ENCODE measurements at regions of chr3 and their contacts with region 1.

Region 1: DNA sequence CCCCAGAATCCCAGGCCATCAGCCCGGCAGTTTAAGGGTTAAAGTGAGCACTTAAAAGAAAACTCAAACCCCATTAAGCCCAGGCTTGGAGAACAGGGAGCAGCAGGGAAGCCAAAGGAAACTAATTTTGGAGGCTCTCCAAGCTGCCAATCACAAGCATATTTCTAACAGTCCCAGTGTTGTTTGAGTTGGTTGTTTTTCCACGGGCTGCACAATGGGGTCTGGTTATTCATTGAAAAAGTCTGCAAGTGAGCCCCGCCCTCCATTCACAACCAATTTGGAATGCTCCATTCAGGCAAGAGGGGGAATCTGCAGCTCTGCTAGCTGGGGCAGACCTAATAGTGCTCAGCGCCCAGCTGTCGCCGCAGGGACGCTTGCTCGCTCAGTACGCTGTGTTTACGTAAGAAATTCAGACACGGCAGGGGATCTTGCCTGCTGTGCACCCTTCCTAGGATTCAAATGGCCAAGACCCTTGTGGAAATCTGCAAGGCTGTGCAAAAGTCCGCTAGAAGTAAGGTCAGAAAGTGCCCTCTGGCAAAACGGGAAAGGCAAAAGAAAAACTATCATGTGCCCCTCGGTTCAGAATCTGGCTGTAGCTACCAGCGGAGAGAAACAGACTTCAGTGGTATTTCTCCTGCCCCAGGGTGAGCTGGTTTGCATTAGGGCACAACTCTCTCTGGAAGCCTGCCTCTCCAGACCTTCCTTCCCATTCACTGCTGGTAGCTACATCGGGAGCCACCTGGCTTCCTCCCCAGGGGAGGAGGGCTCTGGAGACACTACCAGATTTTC is 11.0 kb downstream of the ETV5 start:
- DNase-seq: peak; percentile 75 to 91
- ATAC-seq: peak; percentile 90 to 95
- H3K4me3 ChIP-seq: peak overlapping the region; percentile 31
- H3K27ac ChIP-seq: peak overlapping the region; percentile 63 to 87; a peak in 5 of 6 replicates
- H3K4me1 ChIP-seq: peaks cover 44% of the 10 kb centered on the region
- CTCF ChIP-seq: no peak
- EP300 ChIP-seq: no peak
- POLR2A ChIP-seq: no peak
- RAD21 ChIP-seq: no peak

Region 2: GRCh38 chr3:186108941-186109865 is 11.3 kb after region 1 on chr3 and contains the start of gene ETV5:
- CTCF ChIA-PET with region 1: no interaction called
- POLR2A ChIA-PET with region 1: interaction called, 29 read pairs
- DNase-seq: peak; percentile 97 to 98
- ATAC-seq: peak; percentile 92
- H3K4me3 ChIP-seq: peak within 1 kb of the TSS; percentile 87
- H3K27ac ChIP-seq: peak within 1 kb of the TSS; percentile 94 to 99
- H3K4me1 ChIP-seq: peaks cover 35% of the 10 kb centered on the region
- CTCF ChIP-seq: no peak
- EP300 ChIP-seq: no peak
- POLR2A ChIP-seq: peak; percentile 85
- RAD21 ChIP-seq: no peak
- polyA plus RNA-seq, gene ETV5: 47.0 and 54.7 TPM in 2 replicates